PC-9 (cell line): ENCODE measurements at regions of chr4 and their contacts with region 1.

Region 1: GRCh38 chr4:107279707-107280106 is 243.6 kb upstream of the DKK2 start:
- DNase-seq: peak in 1 of 2 experiments; percentile 56
- H3K4me3 ChIP-seq: no peak overlapping the region
- H3K27ac ChIP-seq: no peak overlapping the region
- H3K4me1 ChIP-seq: no peaks in the 10 kb centered on the region; the same call in 1 of the 2 replicates
- H3K27me3 ChIP-seq: no peaks in the 10 kb centered on the region
- CTCF ChIP-seq: no peak

Region 2: DNA sequence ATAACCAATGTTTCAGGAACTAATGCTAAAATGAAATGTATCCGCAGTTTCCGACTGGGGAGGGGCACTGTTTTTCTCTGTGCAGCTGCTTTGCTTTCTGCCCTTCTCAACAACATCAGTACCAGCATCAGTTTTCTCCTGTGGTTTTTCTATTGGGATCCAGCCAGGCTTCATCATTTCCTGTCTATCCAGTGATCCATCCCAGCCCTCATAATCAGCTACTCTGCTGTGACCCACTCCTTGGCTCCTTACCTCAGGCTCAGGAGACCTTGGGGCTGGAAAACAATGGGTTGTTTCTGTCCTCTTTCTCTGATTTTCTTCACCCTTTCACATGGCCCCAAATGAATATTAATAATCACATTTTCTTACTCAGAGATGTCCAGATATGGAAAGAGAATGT is 21.3 kb before region 1 on chr4:
- CTCF ChIA-PET with region 1: interaction called, 13 read pairs
- POLR2A ChIA-PET with region 1: no interaction called
- intact Hi-C with region 1: no loop called
- DNase-seq: no peak
- H3K4me3 ChIP-seq: no peak overlapping the region
- H3K27ac ChIP-seq: no peak overlapping the region
- H3K4me1 ChIP-seq: no peaks in the 10 kb centered on the region
- H3K27me3 ChIP-seq: no peaks in the 10 kb centered on the region
- CTCF ChIP-seq: no peak